ENCODE measurements at regions of chr5 and their contacts with region 1.

Region 1: DNA sequence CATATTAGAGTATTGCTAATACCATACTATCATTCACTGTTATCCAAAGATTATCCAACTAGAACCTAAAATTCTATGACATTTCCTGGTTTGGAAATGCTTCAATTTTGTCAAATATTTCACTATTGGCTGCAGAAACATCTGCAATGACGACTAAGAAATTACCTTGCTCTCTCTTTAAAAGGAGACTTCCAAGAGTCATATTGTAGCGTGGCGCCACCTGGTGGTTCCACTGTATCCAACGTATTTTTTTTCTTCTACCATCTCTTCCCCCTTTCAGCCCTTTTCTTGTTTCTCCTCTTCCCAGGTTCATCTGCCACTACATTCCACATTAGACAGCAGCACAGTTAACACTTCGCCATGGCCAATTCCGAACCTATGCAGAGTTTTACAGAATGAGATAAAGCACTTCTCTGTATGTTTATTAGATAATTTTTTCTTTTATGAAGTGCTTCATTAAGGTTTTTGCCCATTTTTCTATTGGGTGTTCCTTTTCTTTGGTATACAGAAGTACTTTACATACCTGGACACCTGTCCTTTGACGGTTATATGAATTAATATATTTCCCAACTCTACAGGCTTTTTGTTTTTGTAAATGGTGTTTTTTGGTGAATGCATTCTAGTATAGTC is 153.5 kb downstream of the CDC42SE2 start:
- DNase-seq: no peak
- H3K4me3 ChIP-seq: no peak overlapping the region
- H3K27ac ChIP-seq: no peak overlapping the region
- H3K4me1 ChIP-seq: no peaks in the 10 kb centered on the region
- H3K27me3 ChIP-seq: no peaks in the 10 kb centered on the region
- CTCF ChIP-seq: peak; percentile 59 to 87 (median 83)
- EP300 ChIP-seq: no peak
- POLR2A ChIP-seq: no peak

Region 2: GRCh38 chr5:129904102-129904666 is 1513.2 kb before region 1 on chr5 and contains the start of gene CHSY3:
- intact Hi-C with region 1: loop called (anchors 10 kb)
- DNase-seq: no peak
- H3K4me3 ChIP-seq: peak within 1 kb of the TSS; percentile 67 to 86 (median 74)
- H3K27ac ChIP-seq: peak within 1 kb of the TSS; percentile 74 to 81 (median 78)
- H3K4me1 ChIP-seq: peaks cover 14 to 30% (median 25%) of the 10 kb centered on the region in 4 donors
- H3K27me3 ChIP-seq: peaks cover 4 to 32% (median 13%) of the 10 kb centered on the region in 4 donors
- CTCF ChIP-seq: peak in 2 of 3 experiments; percentile 14 to 34
- EP300 ChIP-seq: no peak
- POLR2A ChIP-seq: no peak
- total RNA-seq, gene CHSY3: 1.2 to 2.1 (median 1.7) TPM

Region 3: GRCh38 chr5:131165119-131165727 is 252.1 kb before region 1 on chr5 and contains the start of gene HINT1:
- intact Hi-C with region 1: loop called (anchors 5 kb)
- DNase-seq: peak; percentile 95
- H3K4me3 ChIP-seq: peak within 1 kb of the TSS; percentile 74 to 94 (median 78)
- H3K27ac ChIP-seq: peak within 1 kb of the TSS; percentile 90 to 97 (median 92)
- H3K4me1 ChIP-seq: peaks cover 10 to 30% (median 27%) of the 10 kb centered on the region in 4 donors
- H3K27me3 ChIP-seq: no peaks in the 10 kb centered on the region
- CTCF ChIP-seq: peak in 2 of 3 experiments; percentile 22 to 44
- EP300 ChIP-seq: no peak
- POLR2A ChIP-seq: peak; percentile 79
- total RNA-seq, gene HINT1: 129 to 251 (median 201) TPM

Region 4: DNA sequence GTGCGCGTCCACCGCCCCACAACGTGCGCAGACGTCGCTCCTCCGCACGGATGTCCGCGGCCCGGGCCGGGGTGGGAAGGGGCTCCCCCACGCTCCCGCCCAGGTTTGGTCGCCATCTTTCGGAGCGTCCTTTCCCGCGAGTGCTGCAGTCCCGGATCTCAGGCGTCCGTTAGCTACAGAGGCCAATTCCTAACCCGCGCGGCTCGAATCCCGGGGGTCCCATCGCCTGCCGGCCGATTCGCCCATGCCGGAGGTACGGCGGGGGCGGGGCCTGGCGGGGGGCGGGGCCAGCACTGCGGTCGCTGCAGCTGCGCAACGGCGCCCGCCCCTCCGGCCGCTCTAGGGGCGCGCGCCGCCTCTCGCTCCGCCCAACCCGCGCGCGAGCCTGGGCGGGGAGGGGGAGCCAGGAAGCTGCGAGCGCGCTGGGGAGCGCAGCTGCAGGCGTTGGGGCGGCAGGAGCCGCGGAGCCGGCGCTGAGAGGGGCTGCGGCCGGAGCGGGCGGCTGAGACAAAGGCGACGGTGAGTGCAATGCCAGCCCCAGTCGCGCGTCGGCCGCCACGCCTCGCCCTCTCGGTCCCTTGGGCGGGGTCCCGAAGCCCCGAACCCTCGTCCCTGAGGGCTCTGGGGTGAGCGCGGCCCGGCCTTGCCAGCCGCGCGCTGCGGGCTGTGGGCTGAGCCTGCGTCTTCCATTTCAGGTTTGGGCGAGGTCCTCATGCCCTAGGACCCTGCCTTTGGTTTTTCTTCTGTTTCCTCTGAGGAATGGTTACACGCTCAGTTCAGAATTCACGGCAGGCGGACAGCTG is 153.5 kb before region 1 on chr5 and contains the start of gene CDC42SE2:
- intact Hi-C with region 1: loop called (anchors 5 kb)
- DNase-seq: peak; percentile 93
- H3K4me3 ChIP-seq: peak within 1 kb of the TSS; percentile 76 to 100 (median 91)
- H3K27ac ChIP-seq: peak within 1 kb of the TSS; percentile 84 to 94 (median 90)
- H3K4me1 ChIP-seq: peaks cover 5 to 33% (median 30%) of the 10 kb centered on the region in 4 donors
- H3K27me3 ChIP-seq: no peaks in the 10 kb centered on the region
- CTCF ChIP-seq: no peak
- EP300 ChIP-seq: no peak
- POLR2A ChIP-seq: peak; percentile 80
- total RNA-seq, gene CDC42SE2: 23.1 to 28.0 (median 25.4) TPM

Region 5: DNA sequence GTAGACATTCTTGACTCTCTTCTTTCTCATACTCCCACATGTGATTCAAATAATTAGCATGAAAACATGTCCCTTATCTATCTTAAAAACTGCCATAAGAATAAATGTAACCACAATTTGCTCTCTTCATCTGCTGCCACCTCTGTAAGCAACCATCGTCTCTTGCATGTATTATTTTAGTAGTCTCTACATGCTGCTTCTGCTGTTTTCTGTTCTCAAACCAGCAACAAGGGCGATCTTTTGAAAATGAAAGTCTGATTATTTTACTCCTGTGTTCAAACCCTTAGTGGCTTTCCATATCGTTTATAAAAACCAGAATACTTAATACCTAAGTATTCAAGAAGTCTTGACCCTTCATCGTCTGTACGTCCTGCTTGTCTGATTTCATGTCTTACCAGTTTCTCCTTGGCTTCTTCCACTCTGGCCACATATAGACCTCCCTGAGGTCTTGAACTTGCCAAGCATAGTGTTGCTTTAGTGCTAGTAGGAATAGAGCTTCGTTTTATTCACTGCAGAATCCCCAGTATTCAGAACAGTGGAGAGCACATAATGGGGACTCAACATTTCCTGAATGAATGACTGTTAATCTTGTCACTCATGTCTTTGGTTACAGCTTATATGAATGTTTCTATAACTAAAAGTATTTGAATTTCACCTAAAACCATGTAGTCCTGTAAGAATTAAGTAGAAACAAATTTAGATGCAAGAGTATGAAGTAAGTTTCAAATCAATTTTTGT is 142.9 kb before region 1 on chr5:
- intact Hi-C with region 1: no loop called
- DNase-seq: no peak
- H3K4me3 ChIP-seq: no peak overlapping the region
- H3K27ac ChIP-seq: no peak overlapping the region
- H3K4me1 ChIP-seq: peaks cover 0 to 23% (median 12%) of the 10 kb centered on the region in 4 donors
- H3K27me3 ChIP-seq: no peaks in the 10 kb centered on the region
- CTCF ChIP-seq: no peak
- EP300 ChIP-seq: no peak
- POLR2A ChIP-seq: no peak